Caco-2 (cell line): ENCODE measurements at regions of chr3 and their contacts with region 1.

Region 1: DNA sequence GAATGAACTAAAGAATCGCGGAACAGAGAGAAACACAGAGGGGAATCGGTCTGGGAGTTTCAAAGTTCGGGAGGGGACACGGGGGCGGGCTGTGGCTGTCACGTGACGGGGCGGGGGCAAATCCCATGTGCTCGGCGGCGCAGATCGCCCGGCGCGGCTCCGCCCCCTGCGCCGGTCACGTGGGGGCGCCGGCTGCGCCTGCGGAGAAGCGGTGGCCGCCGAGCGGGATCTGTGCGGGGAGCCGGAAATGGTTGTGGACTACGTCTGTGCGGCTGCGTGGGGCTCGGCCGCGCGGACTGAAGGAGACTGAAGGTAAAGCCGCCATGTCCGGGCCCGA is at the start of gene EIF4G1:
- DNase-seq: peak; percentile 92 to 94
- H3K4me3 ChIP-seq: peak within 1 kb of the TSS; percentile 89
- H3K4me3 Mint-ChIP-seq: peak within 1 kb of the TSS; percentile 85
- H3K27ac Mint-ChIP-seq: peak within 1 kb of the TSS; percentile 72
- H3K4me1 ChIP-seq: peaks cover 11% of the 10 kb centered on the region
- H3K4me1 Mint-ChIP-seq: peaks cover 9% of the 10 kb centered on the region
- H3K27me3 ChIP-seq: no peaks in the 10 kb centered on the region
- H3K27me3 Mint-ChIP-seq: no peaks in the 10 kb centered on the region
- CTCF ChIP-seq: no peak
- total RNA-seq, gene EIF4G1: 410 and 423 TPM in 2 replicates

Region 2: DNA sequence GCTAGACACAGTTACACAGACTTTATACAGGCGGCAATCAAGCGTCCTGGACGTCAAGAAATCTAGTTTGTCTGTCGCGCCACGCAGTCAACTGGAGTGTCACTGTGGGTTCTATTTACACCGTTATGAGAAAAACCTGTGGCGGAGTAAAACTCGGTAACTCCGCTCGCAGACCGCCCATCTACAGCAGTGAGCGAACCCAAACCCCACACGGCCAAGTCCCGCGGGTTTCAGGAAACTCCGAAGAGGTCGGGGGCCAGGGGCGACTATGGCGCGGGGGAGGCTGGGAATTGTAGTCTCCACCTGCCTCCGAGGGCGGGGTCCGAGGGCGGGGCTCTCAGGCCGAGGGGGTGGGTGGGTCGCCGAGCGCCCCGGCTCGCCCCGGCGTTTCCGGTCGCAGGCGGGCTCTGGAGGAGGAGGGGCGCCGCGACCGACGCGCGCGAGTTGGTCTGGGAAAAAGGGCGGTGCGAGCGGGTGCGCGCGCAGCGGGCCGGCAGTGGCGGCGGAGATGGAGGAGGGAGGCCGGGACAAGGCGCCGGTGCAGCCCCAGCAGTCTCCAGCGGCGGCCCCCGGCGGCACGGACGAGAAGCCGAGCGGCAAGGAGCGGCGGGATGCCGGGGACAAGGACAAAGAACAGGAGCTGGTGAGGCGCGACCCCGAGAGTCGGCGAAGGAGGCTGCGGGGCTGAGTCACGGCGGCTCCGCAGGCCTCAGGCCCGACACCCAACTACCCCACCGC is 15.4 kb before region 1 on chr3 and contains the start of gene PSMD2:
- CTCF ChIA-PET with region 1: no interaction called
- POLR2A ChIA-PET with region 1: no interaction called
- intact Hi-C with region 1: loop called (anchors 1 kb)
- DNase-seq: peak; percentile 97
- H3K4me3 ChIP-seq: peak within 1 kb of the TSS; percentile 77
- H3K4me3 Mint-ChIP-seq: peak within 1 kb of the TSS; percentile 81
- H3K27ac Mint-ChIP-seq: peak within 1 kb of the TSS; percentile 80
- H3K4me1 ChIP-seq: peaks cover 6% of the 10 kb centered on the region; the same call in 1 of the 2 replicates
- H3K4me1 Mint-ChIP-seq: no peaks in the 10 kb centered on the region
- H3K27me3 ChIP-seq: no peaks in the 10 kb centered on the region
- H3K27me3 Mint-ChIP-seq: no peaks in the 10 kb centered on the region
- CTCF ChIP-seq: no peak
- total RNA-seq, gene PSMD2: 285 and 294 TPM in 2 replicates

Region 3: DNA sequence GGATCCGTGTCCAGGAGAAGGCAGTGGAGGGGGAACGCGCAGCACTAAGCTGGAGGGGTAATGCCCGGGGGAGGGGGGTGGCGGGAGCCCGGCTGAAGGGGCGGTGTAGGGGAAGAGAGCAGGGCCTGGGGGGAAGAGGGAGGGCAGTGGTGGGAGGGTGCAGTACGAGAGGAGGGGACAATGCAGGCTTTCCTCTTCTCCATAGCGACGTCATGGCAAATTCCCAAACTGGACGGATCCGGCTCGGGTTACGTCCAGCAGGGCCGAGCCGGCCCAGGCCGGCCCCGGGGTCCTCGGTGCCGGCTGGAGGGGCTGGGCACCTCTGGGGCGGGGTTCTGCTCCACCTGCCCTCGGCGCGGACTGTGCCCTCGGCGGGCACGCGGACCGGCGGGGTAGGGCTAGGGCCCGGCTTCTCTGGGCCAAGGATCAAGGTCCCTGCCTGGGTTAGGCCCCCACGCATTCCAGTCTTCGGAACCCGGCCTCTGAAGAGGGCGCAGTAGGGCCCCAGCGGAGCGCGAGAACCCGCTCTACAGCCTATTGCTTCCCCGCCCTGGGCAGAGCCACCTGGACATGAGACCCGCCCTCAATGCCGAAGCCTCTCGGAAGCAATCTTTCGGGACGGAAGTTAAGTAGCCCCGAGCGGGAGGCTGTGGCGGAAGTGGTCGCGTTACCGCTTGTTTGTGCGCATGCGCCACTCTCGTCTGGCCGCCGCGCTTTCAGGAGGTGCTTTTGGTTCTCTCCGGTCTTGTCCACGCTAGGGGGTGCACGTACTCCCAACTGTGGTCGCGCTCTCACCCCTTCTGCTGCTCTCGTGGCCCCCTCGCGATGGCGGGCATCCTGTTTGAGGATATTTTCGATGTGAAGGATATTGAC is 48.6 kb after region 1 on chr3:
- CTCF ChIA-PET with region 1: no interaction called
- POLR2A ChIA-PET with region 1: no interaction called
- intact Hi-C with region 1: loop called (anchors 1 kb)
- DNase-seq: peak; percentile 98 to 99
- H3K4me3 ChIP-seq: peak overlapping the region; percentile 74
- H3K4me3 Mint-ChIP-seq: peak overlapping the region; percentile 97
- H3K27ac Mint-ChIP-seq: peak overlapping the region; percentile 97
- H3K4me1 ChIP-seq: peaks cover 6% of the 10 kb centered on the region; the same call in 1 of the 2 replicates
- H3K4me1 Mint-ChIP-seq: peaks cover 11% of the 10 kb centered on the region
- H3K27me3 ChIP-seq: no peaks in the 10 kb centered on the region; the same call in 1 of the 2 replicates
- H3K27me3 Mint-ChIP-seq: no peaks in the 10 kb centered on the region
- CTCF ChIP-seq: peak; percentile 61 to 66

Region 4: DNA sequence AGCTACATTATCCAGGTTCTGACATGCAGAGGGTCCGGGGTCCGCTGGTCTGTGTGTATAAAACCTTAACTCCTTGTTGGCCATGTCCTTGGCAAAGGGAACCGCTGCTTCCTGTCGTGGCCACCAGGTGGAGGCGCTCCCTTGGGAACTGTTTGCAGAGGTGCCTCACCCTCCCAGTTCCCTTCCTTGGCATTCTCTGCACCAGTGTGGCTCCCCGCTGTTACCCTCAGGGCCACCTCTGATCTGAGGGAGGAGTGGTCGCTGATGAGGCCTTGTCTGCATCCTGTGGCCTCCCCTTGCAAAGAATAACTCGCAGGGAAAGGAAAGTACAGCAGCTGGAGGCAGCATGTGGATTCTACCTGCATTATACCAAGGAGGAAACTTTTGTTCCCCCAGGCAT is 155.1 kb after region 1 on chr3:
- CTCF ChIA-PET with region 1: no interaction called
- POLR2A ChIA-PET with region 1: no interaction called
- intact Hi-C with region 1: no loop called
- DNase-seq: peak; percentile 60 to 63
- H3K4me3 ChIP-seq: no peak overlapping the region
- H3K4me3 Mint-ChIP-seq: no peak overlapping the region
- H3K27ac Mint-ChIP-seq: no peak overlapping the region
- H3K4me1 ChIP-seq: 0 out of 2 replicates have a peak, but pooled peaks cover 6% of the 10 kb centered on the region
- H3K4me1 Mint-ChIP-seq: no peaks in the 10 kb centered on the region
- H3K27me3 ChIP-seq: no peaks in the 10 kb centered on the region
- H3K27me3 Mint-ChIP-seq: peaks cover 5% of the 10 kb centered on the region
- CTCF ChIP-seq: peak; percentile 77 to 78